Activated CD8-positive, alpha-beta T cell treated with anti-CD3 and anti-CD28 coated beads, Interleukin-2, amount 10 ng/mL, durations not matched to agents 7 days and 5 days (primary cell): ENCODE measurements at regions of chr6 and their contacts with region 1.

Region 1: DNA sequence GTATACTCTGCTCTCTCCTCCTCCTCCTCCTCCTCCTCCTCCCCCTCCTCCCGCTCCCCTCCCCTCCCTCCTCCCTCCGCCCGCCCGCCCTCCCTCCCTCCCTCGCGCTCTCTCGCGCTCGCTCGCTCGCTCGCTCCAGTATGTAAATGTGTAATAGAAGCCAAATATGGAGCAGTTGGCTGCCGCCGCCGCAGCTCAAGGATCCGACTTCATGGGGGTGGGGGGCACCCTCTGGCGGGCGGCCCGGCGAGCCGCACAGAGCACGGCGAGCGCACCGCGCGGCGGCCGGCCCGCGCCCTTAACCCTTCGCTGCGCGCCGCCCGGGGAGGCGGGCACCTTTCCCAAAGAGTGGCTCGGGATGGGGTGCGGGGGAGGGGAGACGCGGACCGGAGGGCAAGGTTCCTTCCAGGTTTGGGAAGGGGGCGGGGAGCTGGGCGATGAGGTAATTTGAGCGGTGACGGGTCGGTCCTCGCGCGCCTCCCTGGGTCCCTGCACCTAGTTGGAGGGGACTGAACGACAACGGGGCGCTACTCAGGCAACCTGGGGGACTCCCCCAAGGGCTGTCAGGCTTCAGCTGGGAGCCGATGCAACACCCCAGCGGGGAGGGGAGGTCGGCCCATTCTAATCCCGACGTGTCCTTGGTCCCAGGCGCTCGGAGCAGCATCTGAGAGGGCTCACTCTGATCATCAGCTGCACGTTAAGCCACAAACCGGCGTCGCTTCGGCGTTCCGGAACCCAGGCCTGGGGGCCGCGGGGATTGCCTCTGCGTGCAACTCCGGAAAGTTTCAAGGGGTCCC is 409 bp upstream of the ATXN1 start:
- DNase-seq: peak; percentile 90
- ATAC-seq: peak; percentile 64
- H3K4me3 Mint-ChIP-seq: peak overlapping the region; percentile 99
- H3K27ac Mint-ChIP-seq: peak overlapping the region; percentile 97
- H3K4me1 Mint-ChIP-seq: peaks cover 60% of the 10 kb centered on the region
- H3K27me3 Mint-ChIP-seq: no peaks in the 10 kb centered on the region

Region 2: GRCh38 chr6:16332175-16332542 is 429.5 kb before region 1 on chr6:
- CTCF ChIA-PET with region 1: interaction called, 60 read pairs
- POLR2A ChIA-PET with region 1: interaction called, 3 read pairs
- DNase-seq: peak; percentile 86
- ATAC-seq: peak; percentile 94
- H3K4me3 Mint-ChIP-seq: no peak overlapping the region
- H3K27ac Mint-ChIP-seq: no peak overlapping the region
- H3K4me1 Mint-ChIP-seq: no peaks in the 10 kb centered on the region
- H3K27me3 Mint-ChIP-seq: no peaks in the 10 kb centered on the region

Region 3: GRCh38 chr6:16471222-16471909 is 290.3 kb before region 1 on chr6:
- CTCF ChIA-PET with region 1: interaction called, 15 read pairs
- POLR2A ChIA-PET with region 1: interaction called, 14 read pairs
- DNase-seq: no peak
- ATAC-seq: peak; percentile 20
- H3K4me3 Mint-ChIP-seq: no peak overlapping the region
- H3K27ac Mint-ChIP-seq: peak overlapping the region; percentile 61
- H3K4me1 Mint-ChIP-seq: peaks cover 71% of the 10 kb centered on the region
- H3K27me3 Mint-ChIP-seq: no peaks in the 10 kb centered on the region

Region 4: DNA sequence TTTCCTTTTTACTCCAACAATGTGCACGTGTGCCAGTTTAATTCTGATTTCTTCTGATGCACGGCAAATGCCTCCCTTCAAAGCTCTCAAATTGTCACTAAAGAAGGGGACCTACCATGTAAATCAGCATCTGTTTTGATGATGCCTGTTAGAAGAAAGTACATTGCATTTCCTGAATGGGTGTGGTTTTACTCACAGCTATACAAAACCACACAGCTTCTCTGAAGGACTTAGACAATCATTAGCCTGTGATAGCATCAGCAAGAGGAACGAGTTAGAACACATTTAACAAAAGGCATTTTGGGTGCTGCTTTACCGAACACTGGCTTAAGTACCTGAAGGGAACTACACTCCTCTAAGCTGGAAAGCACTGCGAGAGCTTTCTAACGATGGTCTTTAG is 109.8 kb before region 1 on chr6:
- CTCF ChIA-PET with region 1: interaction called, 29 read pairs
- POLR2A ChIA-PET with region 1: interaction called, 13 read pairs
- DNase-seq: peak; percentile 45
- ATAC-seq: peak; percentile 90
- H3K4me3 Mint-ChIP-seq: peak overlapping the region; percentile 16
- H3K27ac Mint-ChIP-seq: peak overlapping the region; percentile 87
- H3K4me1 Mint-ChIP-seq: peaks cover 53% of the 10 kb centered on the region
- H3K27me3 Mint-ChIP-seq: no peaks in the 10 kb centered on the region

Region 5: DNA sequence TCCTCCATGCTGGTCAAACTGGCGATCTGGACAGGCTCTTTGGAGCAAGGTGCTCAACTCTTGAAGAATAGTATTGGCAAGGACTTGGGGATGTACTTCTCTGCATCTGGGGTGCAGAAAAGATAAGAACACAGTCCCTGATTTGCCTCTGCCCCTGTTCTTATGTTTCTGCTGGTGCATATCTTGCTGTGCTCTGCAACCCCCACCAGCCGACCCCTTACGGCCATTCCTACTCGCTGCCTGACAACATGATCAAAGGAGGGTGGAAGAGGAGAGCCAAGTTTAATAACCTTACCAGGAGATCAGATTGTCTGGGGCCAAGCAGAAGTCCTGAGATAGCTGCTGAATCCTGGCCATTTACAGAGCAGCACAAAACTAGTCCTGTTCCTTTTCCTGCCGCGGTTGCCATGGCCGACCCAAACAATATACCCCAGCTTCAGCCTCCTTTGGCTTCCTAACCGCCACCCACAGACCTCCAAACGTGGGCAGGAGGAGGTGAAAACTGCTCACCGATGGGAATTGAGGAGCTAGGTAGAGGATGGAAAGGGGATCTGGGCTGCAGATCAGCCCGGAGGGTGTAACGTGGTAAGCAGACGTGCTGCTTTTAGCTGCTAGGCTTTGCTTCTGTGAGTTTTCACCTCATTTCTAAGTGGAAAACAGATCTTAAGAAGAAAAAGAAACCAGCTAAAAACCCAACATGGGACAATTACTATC is 61.3 kb before region 1 on chr6:
- CTCF ChIA-PET with region 1: interaction called, 50 read pairs
- POLR2A ChIA-PET with region 1: interaction called, 26 read pairs
- DNase-seq: peak; percentile 66
- ATAC-seq: peak; percentile 73
- H3K4me3 Mint-ChIP-seq: peak overlapping the region; percentile 70
- H3K27ac Mint-ChIP-seq: peak overlapping the region; percentile 78
- H3K4me1 Mint-ChIP-seq: peaks cover 72% of the 10 kb centered on the region
- H3K27me3 Mint-ChIP-seq: no peaks in the 10 kb centered on the region

Region 6: GRCh38 chr6:16731478-16732051 is 30.1 kb before region 1 on chr6:
- CTCF ChIA-PET with region 1: interaction called, 55 read pairs
- POLR2A ChIA-PET with region 1: interaction called, 7 read pairs
- DNase-seq: peak; percentile 62
- ATAC-seq: peak; percentile 87
- H3K4me3 Mint-ChIP-seq: peak overlapping the region; percentile 63
- H3K27ac Mint-ChIP-seq: peak overlapping the region; percentile 82
- H3K4me1 Mint-ChIP-seq: peaks cover 65% of the 10 kb centered on the region
- H3K27me3 Mint-ChIP-seq: no peaks in the 10 kb centered on the region

Region 7: GRCh38 chr6:16807956-16808355 is 46.3 kb after region 1 on chr6:
- CTCF ChIA-PET with region 1: no interaction called
- POLR2A ChIA-PET with region 1: no interaction called
- DNase-seq: no peak
- ATAC-seq: no peak
- H3K4me3 Mint-ChIP-seq: no peak overlapping the region
- H3K27ac Mint-ChIP-seq: no peak overlapping the region
- H3K4me1 Mint-ChIP-seq: no peaks in the 10 kb centered on the region
- H3K27me3 Mint-ChIP-seq: peaks cover 4% of the 10 kb centered on the region

Region 8: GRCh38 chr6:16964553-16965501 is 203.2 kb after region 1 on chr6:
- CTCF ChIA-PET with region 1: interaction called, 50 read pairs
- POLR2A ChIA-PET with region 1: interaction called, 3 read pairs
- DNase-seq: peak; percentile 71
- ATAC-seq: peak; percentile 87
- H3K4me3 Mint-ChIP-seq: no peak overlapping the region
- H3K27ac Mint-ChIP-seq: no peak overlapping the region
- H3K4me1 Mint-ChIP-seq: peaks cover 5% of the 10 kb centered on the region
- H3K27me3 Mint-ChIP-seq: peaks cover 9% of the 10 kb centered on the region